Activated CD4-positive, alpha-beta T cell treated with anti-CD3 and anti-CD28 coated beads for 36 hours (primary cell): ENCODE measurements at regions of chr10 and their contacts with region 1.

Region 1: GRCh38 chr10:3852147-3852904 is 67.3 kb upstream of the KLF6 start:
- DNase-seq: peak; percentile 83
- ATAC-seq: peak; percentile 93
- H3K4me3 Mint-ChIP-seq: peak overlapping the region; percentile 34
- H3K27ac Mint-ChIP-seq: peak overlapping the region; percentile 94
- H3K4me1 Mint-ChIP-seq: peaks cover 48% of the 10 kb centered on the region
- H3K27me3 Mint-ChIP-seq: no peaks in the 10 kb centered on the region

Region 2: GRCh38 chr10:3805791-3806461 is 46.4 kb before region 1 on chr10:
- CTCF ChIA-PET with region 1: interaction called, 21 read pairs
- POLR2A ChIA-PET with region 1: interaction called, 32 read pairs
- intact Hi-C with region 1: loop called (anchors 1 kb)
- DNase-seq: peak; percentile 59
- ATAC-seq: no peak
- H3K4me3 Mint-ChIP-seq: peak overlapping the region; percentile 46
- H3K27ac Mint-ChIP-seq: no peak overlapping the region
- H3K4me1 Mint-ChIP-seq: peaks cover 63% of the 10 kb centered on the region
- H3K27me3 Mint-ChIP-seq: no peaks in the 10 kb centered on the region

Region 3: DNA sequence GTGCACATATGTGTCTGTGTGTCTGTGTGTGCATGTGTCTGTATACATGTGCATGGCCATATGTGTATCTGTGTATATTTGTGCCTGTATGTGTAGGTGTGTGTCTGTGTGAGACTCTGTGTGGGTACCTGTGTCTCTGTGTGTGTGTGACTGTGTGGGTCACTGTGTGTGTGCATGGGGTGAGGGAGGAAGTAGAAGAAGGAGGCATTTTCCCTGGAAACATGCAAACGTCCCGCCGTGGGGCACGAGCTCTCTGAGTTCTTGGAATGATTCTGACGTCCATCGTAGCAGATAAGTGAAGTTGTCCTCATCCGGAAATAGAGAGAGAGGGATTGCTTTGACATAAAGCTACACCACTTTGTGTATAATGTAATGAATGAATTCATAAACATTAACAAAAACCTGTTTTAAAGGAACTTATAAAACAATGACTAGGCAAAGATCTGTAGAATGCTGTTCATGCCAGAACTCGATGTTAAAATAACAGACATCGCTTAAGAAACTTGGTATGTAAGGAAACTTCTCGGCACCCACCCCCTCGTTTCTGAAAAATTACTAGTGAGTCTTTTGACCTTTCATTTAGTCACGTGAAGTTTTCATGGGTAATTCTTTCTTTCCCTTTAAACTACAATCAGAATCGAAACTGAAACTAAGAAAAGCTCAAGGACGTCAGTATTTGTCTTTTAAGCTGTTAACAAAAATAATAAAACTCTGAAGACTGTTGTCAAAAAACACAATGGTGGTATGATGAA is 23.7 kb before region 1 on chr10:
- CTCF ChIA-PET with region 1: interaction called, 9 read pairs
- POLR2A ChIA-PET with region 1: interaction called, 12 read pairs
- intact Hi-C with region 1: loop called (anchors 1 kb)
- DNase-seq: peak; percentile 77
- ATAC-seq: peak; percentile 62
- H3K4me3 Mint-ChIP-seq: peak overlapping the region; percentile 56
- H3K27ac Mint-ChIP-seq: peak overlapping the region; percentile 98
- H3K4me1 Mint-ChIP-seq: peaks cover 63% of the 10 kb centered on the region
- H3K27me3 Mint-ChIP-seq: no peaks in the 10 kb centered on the region

Region 4: DNA sequence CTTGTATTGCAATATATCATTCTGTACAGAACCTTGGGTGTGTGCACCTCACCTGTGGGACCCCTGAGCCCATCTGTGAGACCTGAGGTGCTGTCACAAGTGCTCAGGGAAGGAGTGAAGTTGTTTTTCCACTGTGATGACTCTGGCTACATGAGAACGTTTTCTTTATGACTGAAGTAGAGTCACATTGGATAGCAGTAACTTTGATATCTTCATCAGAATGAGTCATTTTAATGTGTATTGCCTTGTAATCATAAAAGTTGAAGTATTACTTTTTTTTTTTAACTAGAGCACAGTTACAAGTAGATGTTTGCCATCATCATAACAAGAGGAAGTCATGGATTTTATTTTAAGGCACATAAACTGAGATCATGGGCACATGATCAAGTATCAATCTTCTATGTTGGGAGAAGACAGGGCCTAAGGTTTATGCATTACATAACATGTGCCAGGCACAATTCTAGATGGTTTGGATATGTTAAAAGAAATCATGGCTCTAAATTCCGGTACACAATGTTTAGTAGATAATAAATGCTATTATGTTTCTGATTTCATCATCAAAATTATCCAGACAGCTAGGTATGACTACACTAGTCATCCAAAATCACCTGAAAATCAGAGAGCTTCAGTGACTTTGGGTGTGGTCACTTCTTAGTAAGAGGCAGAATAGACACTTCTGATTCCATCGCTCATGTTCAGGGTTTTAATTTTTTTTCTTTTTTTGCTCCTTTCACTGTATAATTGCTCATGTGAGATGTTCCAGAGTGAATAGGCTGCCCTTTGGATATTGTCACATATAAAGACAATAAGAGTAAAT is 15.3 kb after region 1 on chr10:
- CTCF ChIA-PET with region 1: interaction called, 25 read pairs
- POLR2A ChIA-PET with region 1: interaction called, 28 read pairs
- intact Hi-C with region 1: loop called (anchors 1 kb)
- DNase-seq: peak; percentile 60
- ATAC-seq: peak; percentile 76
- H3K4me3 Mint-ChIP-seq: peak overlapping the region; percentile 10
- H3K27ac Mint-ChIP-seq: peak overlapping the region; percentile 81
- H3K4me1 Mint-ChIP-seq: peaks cover 69% of the 10 kb centered on the region
- H3K27me3 Mint-ChIP-seq: no peaks in the 10 kb centered on the region